ENCODE measurements at regions of chr16 and their contacts with region 1.

Region 1: DNA sequence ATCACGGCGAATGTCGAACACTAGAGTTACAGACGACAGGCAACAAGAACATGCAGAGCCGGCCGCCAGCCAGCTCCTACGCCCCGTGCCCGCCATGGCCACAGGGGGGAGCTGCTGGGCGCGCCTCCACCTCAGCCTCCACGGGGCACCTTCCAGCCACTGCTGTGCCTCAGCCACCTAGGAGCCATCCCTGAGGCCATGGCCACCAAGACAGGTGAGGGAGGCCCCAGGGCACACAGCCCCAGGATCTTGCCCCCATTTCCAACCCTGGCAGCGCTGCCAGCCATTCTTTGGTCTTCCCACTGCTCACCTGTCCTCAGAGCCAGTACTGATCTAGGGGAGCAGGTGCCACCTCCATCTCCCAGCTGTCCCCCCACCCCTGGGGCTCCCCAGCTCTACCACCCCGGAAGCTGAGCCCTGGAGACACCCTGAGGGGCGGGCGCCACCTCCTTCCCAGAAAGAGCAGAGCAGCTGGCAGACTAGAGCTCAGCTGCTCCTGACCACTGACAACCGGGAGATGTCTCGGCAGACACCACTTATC is 11.8 kb downstream of the GNPTG start:
- DNase-seq: peak; percentile 79
- H3K4me3 Mint-ChIP-seq: no peak overlapping the region
- H3K27ac Mint-ChIP-seq: peak overlapping the region; percentile 46
- H3K4me1 Mint-ChIP-seq: peaks cover 2% of the 10 kb centered on the region
- H3K27me3 Mint-ChIP-seq: no peaks in the 10 kb centered on the region

Region 2: GRCh38 chr16:1408171-1408837 is 44.7 kb after region 1 on chr16:
- CTCF ChIA-PET with region 1: interaction called, 7 read pairs
- intact Hi-C with region 1: loop called (anchors 1 kb)
- DNase-seq: peak; percentile 93
- H3K4me3 Mint-ChIP-seq: peak overlapping the region; percentile 74
- H3K27ac Mint-ChIP-seq: no peak overlapping the region
- H3K4me1 Mint-ChIP-seq: peaks cover 25% of the 10 kb centered on the region
- H3K27me3 Mint-ChIP-seq: no peaks in the 10 kb centered on the region

Region 3: DNA sequence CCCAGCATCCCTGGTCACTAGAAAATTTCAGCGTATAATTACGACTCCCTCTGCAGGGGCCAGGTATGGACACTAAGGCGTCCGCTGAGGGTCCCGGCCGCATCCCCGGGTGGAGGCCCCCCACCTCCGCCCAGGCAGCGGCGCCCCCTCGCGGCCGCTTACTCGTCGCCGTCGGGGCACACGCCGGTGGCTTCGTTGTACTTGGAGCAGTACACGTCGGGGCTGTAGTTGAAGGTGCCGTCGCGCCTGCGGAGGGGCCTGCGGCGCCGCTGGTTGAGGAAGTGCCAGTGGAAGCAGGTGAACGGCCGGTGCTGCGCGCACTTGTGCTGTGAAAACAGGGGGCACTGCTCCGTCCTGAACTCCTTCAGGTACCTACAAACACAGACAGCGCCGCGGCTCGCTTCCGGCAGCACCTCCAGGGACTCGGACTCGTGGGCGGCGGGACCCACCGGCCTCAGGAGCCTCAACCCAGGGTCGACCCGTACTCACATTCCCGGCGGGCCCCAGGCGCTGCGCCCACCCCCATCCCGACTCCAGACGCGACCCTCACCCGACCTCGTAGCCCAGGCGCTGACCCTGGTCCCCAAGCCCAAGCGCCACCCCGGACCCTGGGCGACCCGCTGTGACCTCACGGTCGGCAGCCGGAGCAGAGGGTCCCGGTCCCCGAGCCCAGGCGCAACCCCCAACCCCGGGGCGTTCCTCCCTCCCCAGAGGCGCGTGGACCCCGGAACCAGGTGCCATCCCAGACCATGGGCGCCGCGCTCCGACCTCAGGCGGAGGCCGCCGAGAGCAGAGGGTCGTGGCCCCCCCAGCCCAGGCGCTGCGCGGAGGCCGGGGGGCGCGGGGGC is 50.3 kb after region 1 on chr16:
- CTCF ChIA-PET with region 1: interaction called, 7 read pairs
- intact Hi-C with region 1: loop called (anchors 1 kb)
- DNase-seq: peak; percentile 79
- H3K4me3 Mint-ChIP-seq: peak overlapping the region; percentile 84
- H3K27ac Mint-ChIP-seq: peak overlapping the region; percentile 86
- H3K4me1 Mint-ChIP-seq: peaks cover 33% of the 10 kb centered on the region
- H3K27me3 Mint-ChIP-seq: no peaks in the 10 kb centered on the region

Region 4: GRCh38 chr16:1543085-1543896 is 179.7 kb after region 1 on chr16:
- CTCF ChIA-PET with region 1: interaction called, 11 read pairs
- intact Hi-C with region 1: loop called (anchors 1 kb)
- DNase-seq: peak; percentile 84
- H3K4me3 Mint-ChIP-seq: peak overlapping the region; percentile 60
- H3K27ac Mint-ChIP-seq: peak overlapping the region; percentile 89
- H3K4me1 Mint-ChIP-seq: peaks cover 79% of the 10 kb centered on the region
- H3K27me3 Mint-ChIP-seq: no peaks in the 10 kb centered on the region

Measured in activated naive CD4-positive, alpha-beta T cell treated with anti-CD3 and anti-CD28 coated beads for 36 hours (primary cell).